ENCODE measurements at regions of chr3 and their contacts with region 1.

Region 1: DNA sequence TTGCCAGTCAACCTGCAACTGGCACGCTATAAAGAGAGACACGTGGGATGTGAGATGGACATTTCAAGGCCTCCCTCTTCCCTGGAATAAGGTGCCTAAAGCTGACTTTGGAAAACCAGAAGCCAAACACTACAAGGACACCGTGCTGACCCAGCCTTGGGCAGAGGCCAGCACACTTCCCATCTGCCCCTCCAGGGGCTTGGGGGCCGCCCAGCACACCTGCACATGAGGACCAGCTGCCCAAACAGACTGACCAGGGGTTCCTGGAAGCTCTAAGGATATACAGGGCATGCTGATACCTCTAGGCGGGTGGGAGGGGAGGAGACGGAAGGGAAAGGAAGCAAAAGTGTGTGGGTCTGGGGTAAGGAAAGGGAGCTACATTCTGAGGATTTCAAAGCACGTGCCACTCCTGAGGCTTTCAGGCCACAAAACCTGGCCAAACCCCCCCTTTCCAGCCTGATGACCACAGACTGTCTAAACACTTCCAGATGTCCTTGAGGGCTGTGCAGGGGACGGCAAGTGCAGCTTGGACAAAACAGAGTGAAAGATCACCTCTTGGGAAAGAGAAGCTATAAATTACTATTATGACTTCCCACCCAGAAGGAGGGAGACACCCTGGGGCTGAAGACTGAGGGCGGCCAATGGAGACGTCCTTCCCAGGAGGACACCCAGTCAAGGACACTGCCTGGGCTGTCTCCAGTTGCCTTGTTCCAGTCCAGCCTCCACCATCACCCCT is 57.9 kb downstream of the ADCY5 start:
- DNase-seq: no peak
- H3K4me3 ChIP-seq: no peak overlapping the region
- H3K27ac ChIP-seq: no peak overlapping the region
- H3K4me1 ChIP-seq: no peaks in the 10 kb centered on the region
- H3K27me3 ChIP-seq: no peaks in the 10 kb centered on the region
- CTCF ChIP-seq: no peak

Region 2: DNA sequence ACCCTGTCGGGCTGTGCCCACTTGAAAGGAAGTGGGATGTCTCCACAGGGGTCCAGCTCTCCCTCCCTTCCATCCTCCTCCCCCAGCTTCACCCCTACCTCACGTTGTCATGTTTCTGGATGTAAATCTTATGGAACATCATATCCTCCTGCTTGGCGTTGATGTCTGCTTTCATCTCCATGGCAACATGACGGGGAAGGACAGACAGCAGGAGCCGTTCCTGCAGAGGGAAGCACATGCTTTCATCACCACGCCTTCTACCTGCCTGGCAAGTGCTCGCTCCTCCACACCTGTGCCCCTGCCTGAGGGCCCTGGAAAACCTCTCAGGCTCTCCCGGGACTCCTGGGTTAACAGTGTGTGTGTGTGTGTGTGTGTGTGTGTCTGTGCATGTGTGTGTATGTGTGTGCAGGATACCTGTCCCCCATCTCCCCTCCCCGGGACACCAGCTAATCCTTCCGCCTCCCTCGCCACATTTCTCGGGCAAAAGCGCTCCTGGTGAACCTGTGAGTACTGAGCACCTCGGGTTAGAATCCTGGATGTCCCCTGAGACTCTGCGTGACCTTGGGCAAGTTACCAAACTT is 43.3 kb before region 1 on chr3:
- CTCF ChIA-PET with region 1: no interaction called
- dilution Hi-C with region 1: loop called (anchors 5 kb)
- in situ Hi-C with region 1: no loop called
- intact Hi-C with region 1: no loop called
- DNase-seq: no peak
- H3K4me3 ChIP-seq: no peak overlapping the region
- H3K27ac ChIP-seq: no peak overlapping the region
- H3K4me1 ChIP-seq: no peaks in the 10 kb centered on the region
- H3K27me3 ChIP-seq: peaks cover 9% of the 10 kb centered on the region
- CTCF ChIP-seq: no peak

Region 3: GRCh38 chr3:123986427-123986826 is 595.4 kb after region 1 on chr3:
- CTCF ChIA-PET with region 1: no interaction called
- dilution Hi-C with region 1: no loop called
- in situ Hi-C with region 1: no loop called
- intact Hi-C with region 1: no loop called
- DNase-seq: no peak
- H3K4me3 ChIP-seq: no peak overlapping the region
- H3K27ac ChIP-seq: no peak overlapping the region
- H3K4me1 ChIP-seq: no peaks in the 10 kb centered on the region
- H3K27me3 ChIP-seq: peaks cover 10% of the 10 kb centered on the region
- CTCF ChIP-seq: no peak